ENCODE measurements at regions of chr7 and their contacts with region 1.

Region 1: GRCh38 chr7:30396389-30396788 is 82.2 kb downstream of the NOD1 start:
- DNase-seq: no peak
- H3K4me3 ChIP-seq: no peak overlapping the region
- H3K27me3 ChIP-seq: no peaks in the 10 kb centered on the region
- CTCF ChIP-seq: peak; percentile 8; the same call in 1 of the 2 replicates

Region 2: GRCh38 chr7:30380294-30380693 is 16.1 kb before region 1 on chr7:
- CTCF ChIA-PET with region 1: interaction called, 4 read pairs
- POLR2A ChIA-PET with region 1: interaction called, 22 read pairs
- DNase-seq: no peak
- H3K4me3 ChIP-seq: no peak overlapping the region
- H3K27me3 ChIP-seq: no peaks in the 10 kb centered on the region
- CTCF ChIP-seq: no peak

Region 3: GRCh38 chr7:30422922-30423321 is 26.5 kb after region 1 on chr7:
- CTCF ChIA-PET with region 1: no interaction called
- POLR2A ChIA-PET with region 1: no interaction called
- DNase-seq: no peak
- H3K4me3 ChIP-seq: no peak overlapping the region
- H3K27me3 ChIP-seq: no peaks in the 10 kb centered on the region
- CTCF ChIP-seq: no peak

Measured in BJ (cell line).